ENCODE measurements at regions of chr9 and their contacts with region 1.

Region 1: GRCh38 chr9:15295761-15296405 is 11.1 kb downstream of the TTC39B start:
- DNase-seq: peak in 2 of 9 experiments; percentile 63 to 82
- ATAC-seq: peak; percentile 15
- H3K4me3 ChIP-seq: peak overlapping the region; percentile 44 to 48
- H3K4me3 Mint-ChIP-seq: peak overlapping the region; percentile 81
- H3K27ac ChIP-seq: peak overlapping the region; percentile 74 to 95
- H3K27ac Mint-ChIP-seq: peak overlapping the region; percentile 94
- H3K4me1 ChIP-seq: peaks cover 79% of the 10 kb centered on the region
- H3K4me1 Mint-ChIP-seq: peaks cover 87% of the 10 kb centered on the region
- H3K27me3 ChIP-seq: no peaks in the 10 kb centered on the region
- H3K27me3 Mint-ChIP-seq: no peaks in the 10 kb centered on the region
- CTCF ChIP-seq: no peak

Region 2: GRCh38 chr9:15277400-15278090 is 18.3 kb before region 1 on chr9:
- CTCF ChIA-PET with region 1: interaction called, 5 read pairs
- POLR2A ChIA-PET with region 1: no interaction called
- intact Hi-C with region 1: loop called in 1 of 2 experiments (anchors 1 kb)
- DNase-seq: peak in 2 of 9 experiments; percentile 49 to 59
- ATAC-seq: no peak
- H3K4me3 ChIP-seq: no peak overlapping the region
- H3K4me3 Mint-ChIP-seq: no peak overlapping the region
- H3K27ac ChIP-seq: no peak overlapping the region
- H3K27ac Mint-ChIP-seq: no peak overlapping the region
- H3K4me1 ChIP-seq: no peaks in the 10 kb centered on the region
- H3K4me1 Mint-ChIP-seq: peaks cover 52% of the 10 kb centered on the region
- H3K27me3 ChIP-seq: no peaks in the 10 kb centered on the region
- H3K27me3 Mint-ChIP-seq: no peaks in the 10 kb centered on the region
- CTCF ChIP-seq: peak; percentile 56

Region 3: GRCh38 chr9:15349892-15350778 is 54.3 kb after region 1 on chr9:
- CTCF ChIA-PET with region 1: interaction called, 3 read pairs
- POLR2A ChIA-PET with region 1: no interaction called
- intact Hi-C with region 1: loop called in 1 of 2 experiments (anchors 5 kb)
- DNase-seq: peak in 2 of 9 experiments; percentile 11 to 17
- ATAC-seq: no peak
- H3K4me3 ChIP-seq: no peak overlapping the region
- H3K4me3 Mint-ChIP-seq: no peak overlapping the region
- H3K27ac ChIP-seq: no peak overlapping the region
- H3K27ac Mint-ChIP-seq: no peak overlapping the region
- H3K4me1 ChIP-seq: peaks cover 19% of the 10 kb centered on the region
- H3K4me1 Mint-ChIP-seq: peaks cover 22% of the 10 kb centered on the region
- H3K27me3 ChIP-seq: no peaks in the 10 kb centered on the region
- H3K27me3 Mint-ChIP-seq: no peaks in the 10 kb centered on the region
- CTCF ChIP-seq: no peak

Region 4: GRCh38 chr9:15422372-15423230 is 126.7 kb after region 1 on chr9 and contains the start of gene SNAPC3:
- CTCF ChIA-PET with region 1: interaction called, 5 read pairs
- POLR2A ChIA-PET with region 1: interaction called, 4 read pairs
- intact Hi-C with region 1: loop called in 1 of 2 experiments (anchors 5 kb)
- DNase-seq: peak; percentile 85 to 96 (median 92)
- ATAC-seq: peak; percentile 95
- H3K4me3 ChIP-seq: peak within 1 kb of the TSS; percentile 65 to 83
- H3K4me3 Mint-ChIP-seq: peak within 1 kb of the TSS; percentile 91
- H3K27ac ChIP-seq: peak within 1 kb of the TSS; percentile 64 to 67
- H3K27ac Mint-ChIP-seq: peak within 1 kb of the TSS; percentile 87
- H3K4me1 ChIP-seq: peaks cover 22% of the 10 kb centered on the region
- H3K4me1 Mint-ChIP-seq: peaks cover 38% of the 10 kb centered on the region
- H3K27me3 ChIP-seq: no peaks in the 10 kb centered on the region
- H3K27me3 Mint-ChIP-seq: no peaks in the 10 kb centered on the region
- CTCF ChIP-seq: no peak
- total RNA-seq, gene SNAPC3: 3.4 to 5.0 TPM

Region 5: DNA sequence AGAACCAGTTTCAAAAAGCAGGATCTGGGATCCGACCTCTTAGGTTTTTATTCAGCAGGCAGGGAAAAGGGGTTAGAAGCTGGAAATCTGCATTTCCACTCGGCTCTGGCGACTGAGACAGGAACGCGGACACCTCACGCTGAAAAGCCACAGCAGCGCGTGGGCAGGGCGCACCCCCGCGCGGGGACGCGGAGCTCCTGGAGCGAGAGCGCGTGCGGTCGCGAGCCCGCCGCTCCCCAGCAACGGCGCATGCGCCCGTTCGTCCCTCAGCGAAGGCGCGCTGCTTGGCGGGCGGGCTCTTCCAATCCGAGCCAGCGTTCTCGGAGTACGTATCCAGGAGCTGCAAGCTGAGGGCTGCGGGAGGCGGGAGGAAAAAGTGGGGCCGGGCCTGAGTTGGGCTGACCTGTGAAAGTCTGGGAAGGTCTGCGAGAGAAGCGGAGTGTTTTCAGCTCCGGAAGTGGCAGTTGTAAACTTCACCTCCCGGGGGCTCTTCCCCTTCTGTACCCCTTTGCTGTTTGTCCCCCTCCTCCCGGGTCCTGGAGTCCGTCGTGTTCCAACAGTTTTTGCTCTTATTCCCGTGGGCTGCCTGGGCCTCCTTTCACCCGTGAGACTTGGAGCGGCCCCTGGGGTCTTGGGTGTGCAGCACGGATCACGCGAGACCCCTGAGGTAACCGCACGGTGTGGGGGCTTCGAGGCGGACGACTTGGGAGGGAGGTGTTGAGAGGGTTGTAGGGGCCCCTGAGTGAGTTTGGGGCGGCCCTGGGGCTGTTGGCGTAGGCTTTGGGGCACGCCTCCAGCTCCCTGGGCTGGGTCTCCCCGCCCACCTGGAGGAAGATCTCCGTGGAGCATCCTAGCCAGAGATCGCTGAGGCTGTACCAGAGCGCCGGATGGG is 257.0 kb after region 1 on chr9 and contains the start of gene CCDC171:
- CTCF ChIA-PET with region 1: no interaction called
- POLR2A ChIA-PET with region 1: no interaction called
- intact Hi-C with region 1: loop called in 1 of 2 experiments (anchors 5 kb)
- DNase-seq: peak; percentile 67 to 96 (median 84)
- ATAC-seq: peak; percentile 79
- H3K4me3 ChIP-seq: peak within 1 kb of the TSS; percentile 88 to 98
- H3K4me3 Mint-ChIP-seq: peak within 1 kb of the TSS; percentile 95
- H3K27ac ChIP-seq: peak within 1 kb of the TSS; percentile 54 to 75
- H3K27ac Mint-ChIP-seq: peak within 1 kb of the TSS; percentile 82
- H3K4me1 ChIP-seq: no peaks in the 10 kb centered on the region
- H3K4me1 Mint-ChIP-seq: peaks cover 9% of the 10 kb centered on the region
- H3K27me3 ChIP-seq: no peaks in the 10 kb centered on the region
- H3K27me3 Mint-ChIP-seq: no peaks in the 10 kb centered on the region
- CTCF ChIP-seq: no peak
- total RNA-seq, gene CCDC171: 1.1 to 1.7 TPM